Pancreas (tissue), 10 donors: ENCODE measurements at regions of chr2 and their contacts with region 1.

Region 1: GRCh38 chr2:54522624-54523281 is 66.6 kb downstream of the SPTBN1 start:
- DNase-seq: peak in 5 of 6 donors; percentile 60 to 72 (median 63)
- ATAC-seq: peak; percentile 88 to 98 (median 94)
- H3K4me3 ChIP-seq: no peak overlapping the region
- H3K27ac ChIP-seq: no peak overlapping the region
- H3K4me1 ChIP-seq: peaks cover 0 to 6% (median 3%) of the 10 kb centered on the region in 3 donors
- H3K27me3 ChIP-seq: no peaks in the 10 kb centered on the region
- CTCF ChIP-seq: peak; percentile 32 to 59 (median 44)

Region 2: DNA sequence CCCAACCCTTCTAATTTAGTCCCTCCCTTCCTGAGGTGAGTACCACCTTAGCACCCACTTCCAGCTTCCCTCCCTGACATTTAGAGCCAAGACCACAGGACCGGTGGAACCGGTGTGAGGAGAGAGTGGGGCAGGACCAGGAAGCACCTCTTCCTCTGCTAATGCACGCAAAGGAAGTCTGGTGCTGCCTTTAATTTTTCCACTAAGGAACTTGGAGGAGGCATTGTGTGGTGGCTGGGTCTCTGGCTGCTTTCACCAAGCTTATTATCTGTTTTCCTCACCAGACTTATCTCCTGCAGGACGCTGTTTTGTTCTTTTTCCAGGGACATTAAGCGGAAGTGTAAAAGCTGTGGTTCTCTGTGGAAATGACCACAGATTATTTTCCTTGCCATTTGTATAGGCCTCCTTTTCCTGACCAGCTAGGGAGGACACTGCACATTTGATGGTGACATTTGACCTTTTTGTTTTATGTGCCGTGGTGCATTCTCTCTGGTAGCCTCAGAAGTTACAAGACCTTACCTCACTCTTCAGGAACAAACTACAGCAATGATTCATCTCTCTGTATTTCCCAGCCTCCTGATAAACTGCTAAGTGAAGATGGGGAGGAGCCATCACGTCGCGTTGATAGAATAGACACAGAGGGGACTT is 106.5 kb before region 1 on chr2:
- intact Hi-C with region 1: no loop called
- DNase-seq: no peak
- ATAC-seq: peak in 1 of 4 donors; percentile 20
- H3K4me3 ChIP-seq: no peak overlapping the region
- H3K27ac ChIP-seq: no peak overlapping the region
- H3K4me1 ChIP-seq: no peaks in the 10 kb centered on the region
- H3K27me3 ChIP-seq: no peaks in the 10 kb centered on the region
- CTCF ChIP-seq: no peak

Region 3: DNA sequence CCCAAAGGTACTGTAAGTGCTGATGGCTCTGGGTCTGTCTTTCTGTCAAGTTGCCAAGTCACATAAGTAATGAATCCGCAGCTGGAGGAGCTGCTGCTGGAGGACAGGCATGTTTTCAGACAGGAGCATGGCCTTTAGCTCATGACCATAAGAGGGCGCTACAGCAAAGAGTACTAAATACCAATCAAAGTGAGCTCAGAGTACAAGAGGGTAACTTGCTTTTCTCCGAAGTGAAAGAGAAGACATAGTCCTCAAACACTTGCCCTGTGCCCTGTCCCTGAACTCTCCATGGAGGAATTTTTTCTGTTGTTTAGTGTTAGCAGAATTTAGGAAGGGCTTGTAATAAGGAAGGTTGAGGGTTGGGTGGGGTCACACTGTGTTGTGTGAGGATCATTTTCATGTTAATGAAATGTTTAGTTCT is 142.7 kb after region 1 on chr2:
- intact Hi-C with region 1: loop called in 1 of 3 experiments (anchors 10 kb)
- DNase-seq: peak in 1 of 6 donors; percentile 50
- ATAC-seq: peak; percentile 46 to 63 (median 56)
- H3K4me3 ChIP-seq: no peak overlapping the region
- H3K27ac ChIP-seq: peak overlapping the region in 1 of 4 donors; percentile 69
- H3K4me1 ChIP-seq: peaks cover 0 to 32% (median 31%) of the 10 kb centered on the region in 3 donors
- H3K27me3 ChIP-seq: no peaks in the 10 kb centered on the region
- CTCF ChIP-seq: peak in 3 of 4 donors; percentile 37 to 45 (median 41)